ENCODE measurements at regions of chr22 and their contacts with region 1.

Region 1: DNA sequence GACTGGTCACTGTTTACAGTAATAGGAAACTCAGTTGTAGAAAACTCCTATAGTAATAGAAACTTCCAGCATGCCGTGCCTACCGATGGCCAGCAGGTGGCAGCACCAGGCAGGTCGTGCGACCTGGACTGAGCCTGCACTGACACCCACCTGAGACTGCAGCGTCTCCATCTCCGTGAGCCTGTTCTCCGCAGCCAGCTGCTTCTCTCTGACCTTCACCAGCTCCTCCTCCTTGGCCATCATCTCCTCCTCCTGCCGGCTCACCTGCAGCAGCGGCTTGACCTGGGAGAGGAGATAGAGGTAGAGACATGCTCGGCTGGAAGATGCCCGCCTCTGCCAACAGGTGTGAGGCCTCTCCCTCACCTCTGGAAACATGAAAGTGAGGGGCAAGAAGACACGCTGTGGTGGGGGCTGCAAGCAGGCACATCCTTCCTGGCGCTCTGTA is 48.5 kb downstream of the APOL1 start:
- DNase-seq: peak; percentile 92

Region 2: DNA sequence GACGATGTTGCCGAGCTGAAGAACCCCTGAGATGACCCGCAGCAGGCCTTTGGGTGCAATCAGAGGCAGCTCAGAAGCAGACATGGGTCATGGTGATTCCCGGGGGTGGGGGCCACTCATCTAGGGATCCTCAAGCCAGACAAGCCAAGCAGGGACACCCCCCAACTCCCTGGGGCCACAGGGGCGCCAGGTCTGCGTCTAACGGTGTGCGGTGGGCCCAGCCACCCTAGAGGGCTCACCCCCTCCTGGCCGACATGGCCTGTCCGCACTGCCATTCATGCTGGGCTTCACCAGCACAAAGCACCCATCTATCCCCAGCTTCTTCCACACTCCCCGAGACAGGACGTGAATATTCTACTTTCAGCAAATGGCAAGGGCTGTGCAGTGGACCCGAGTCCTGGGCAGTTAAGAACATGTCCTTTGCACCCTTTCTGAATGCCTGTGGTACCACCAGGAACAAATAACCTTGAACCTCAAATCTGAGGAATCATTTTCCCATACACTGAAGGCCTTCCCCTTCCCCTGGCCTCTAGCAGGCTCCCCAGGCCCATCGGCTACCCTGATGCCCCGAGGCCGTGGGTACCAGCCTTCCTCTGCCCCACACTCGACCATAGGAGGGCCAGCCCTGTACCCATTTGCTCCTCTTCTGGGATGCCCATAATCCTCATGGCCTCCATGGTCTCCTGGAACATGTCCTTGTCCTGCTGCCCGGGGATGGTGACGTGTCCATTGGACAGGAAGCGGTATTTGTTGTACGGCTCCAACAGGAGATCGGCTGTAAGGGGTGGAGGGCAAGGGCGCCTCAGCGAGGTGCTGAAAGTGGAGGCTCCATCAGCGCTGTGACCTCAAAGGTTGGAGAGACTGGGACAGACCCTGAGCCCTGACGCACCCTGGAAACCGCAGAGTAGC is 18.4 kb after region 1 on chr22:
- intact Hi-C with region 1: loop called in 1 of 2 experiments (anchors 2 kb)
- DNase-seq: no peak

Region 3: DNA sequence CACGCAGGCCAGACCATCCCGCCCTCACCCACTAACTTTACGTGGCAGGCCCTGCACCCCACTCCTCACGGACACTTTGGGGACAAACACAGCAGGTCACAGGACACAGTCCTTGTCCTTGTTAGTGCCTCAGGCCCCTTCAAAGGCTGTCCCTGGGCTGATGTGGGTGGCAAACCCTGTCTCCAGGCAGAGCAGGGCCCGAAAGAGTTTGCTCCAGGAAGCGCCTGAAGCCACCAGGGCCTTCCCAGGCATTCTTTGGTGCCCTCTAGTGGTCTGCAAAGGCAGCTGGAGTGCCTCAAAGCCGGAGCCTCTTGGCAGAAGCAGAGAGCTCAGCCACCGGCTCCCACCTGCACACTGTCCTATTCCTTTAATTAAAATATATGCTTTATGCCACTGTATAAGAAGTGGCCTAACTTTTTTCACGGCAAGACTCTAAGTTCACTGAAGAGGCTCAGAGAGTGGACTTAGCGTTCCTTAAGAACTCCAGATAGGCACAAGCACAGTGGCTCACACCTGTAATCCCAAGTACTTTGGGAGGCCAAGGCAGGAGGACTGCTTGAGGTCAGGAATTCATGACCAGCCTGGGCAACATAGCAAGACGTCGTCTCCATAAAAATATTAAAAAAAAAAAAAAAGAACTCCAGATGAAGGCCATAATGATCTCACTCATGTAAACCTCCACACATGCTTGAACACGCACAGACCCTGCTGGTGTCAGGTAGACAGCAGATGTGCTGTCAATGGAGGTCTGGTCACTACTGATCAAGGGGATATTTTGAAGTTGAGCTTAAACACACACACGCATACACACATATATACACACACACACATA is 169.0 kb after region 1 on chr22:
- intact Hi-C with region 1: loop called (anchors 5 kb)
- DNase-seq: peak; percentile 92

Region 4: GRCh38 chr22:37063431-37064420 is 762.3 kb after region 1 on chr22:
- intact Hi-C with region 1: no loop called
- DNase-seq: no peak

Measured in posterior vena cava (tissue), 2 donors.